GM10248 (cell line): ENCODE measurements at regions of chr3 and their contacts with region 1.

Region 1: DNA sequence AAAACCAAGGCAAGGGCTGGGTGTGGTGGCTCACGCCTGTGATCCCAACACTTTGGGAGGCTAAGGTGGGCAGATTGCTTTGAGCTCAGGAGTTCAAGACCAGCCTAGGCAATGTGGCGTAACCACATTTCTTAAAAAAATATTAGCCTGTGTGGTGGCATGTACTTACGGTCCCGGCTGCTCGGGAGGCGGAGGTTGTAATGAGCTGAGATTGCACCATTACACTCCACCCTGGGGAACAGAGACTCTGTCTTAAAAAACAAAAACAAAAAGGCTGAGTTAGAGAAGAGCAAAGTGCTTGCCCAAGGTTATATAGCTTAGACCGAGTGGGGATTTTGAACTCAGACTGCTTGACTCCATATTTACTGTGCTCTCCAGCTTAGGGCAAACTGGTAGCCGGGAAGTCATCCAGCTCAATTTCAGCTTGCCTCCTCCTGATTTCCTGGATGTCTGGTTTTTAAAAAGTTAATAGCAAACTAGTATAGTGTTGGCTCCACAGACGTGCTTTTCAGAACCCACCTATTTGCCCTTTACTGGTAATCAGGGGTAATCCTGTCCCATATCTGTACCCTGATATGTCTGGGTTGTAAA is 138.9 kb downstream of the CACNA1D start:
- DNase-seq: no peak
- CTCF ChIP-seq: no peak

Region 2: GRCh38 chr3:53604232-53604631 is 29.1 kb before region 1 on chr3:
- CTCF ChIA-PET with region 1: no interaction called
- POLR2A ChIA-PET with region 1: no interaction called
- DNase-seq: no peak
- CTCF ChIP-seq: no peak

Region 3: DNA sequence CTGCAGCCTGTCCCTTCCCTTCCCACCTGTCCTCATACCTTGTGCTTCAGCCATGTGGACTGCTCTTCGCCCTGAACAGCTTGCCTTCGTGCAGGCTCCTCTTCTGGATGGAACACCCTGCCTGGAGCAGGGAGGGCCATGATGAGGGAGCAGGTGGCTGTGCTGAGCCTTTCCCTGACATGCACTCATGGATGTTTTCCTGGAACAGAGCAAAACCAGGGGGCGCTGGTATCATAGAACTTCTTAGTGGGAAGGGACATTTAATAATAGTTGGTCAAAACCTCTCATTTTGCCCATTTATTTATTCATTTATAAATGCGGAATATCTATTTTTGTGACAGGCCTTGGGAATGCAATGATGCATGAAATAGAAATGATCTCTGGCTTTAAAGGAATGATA is 10.5 kb after region 1 on chr3:
- CTCF ChIA-PET with region 1: interaction called, 11 read pairs
- POLR2A ChIA-PET with region 1: no interaction called
- DNase-seq: no peak
- CTCF ChIP-seq: no peak

Region 4: DNA sequence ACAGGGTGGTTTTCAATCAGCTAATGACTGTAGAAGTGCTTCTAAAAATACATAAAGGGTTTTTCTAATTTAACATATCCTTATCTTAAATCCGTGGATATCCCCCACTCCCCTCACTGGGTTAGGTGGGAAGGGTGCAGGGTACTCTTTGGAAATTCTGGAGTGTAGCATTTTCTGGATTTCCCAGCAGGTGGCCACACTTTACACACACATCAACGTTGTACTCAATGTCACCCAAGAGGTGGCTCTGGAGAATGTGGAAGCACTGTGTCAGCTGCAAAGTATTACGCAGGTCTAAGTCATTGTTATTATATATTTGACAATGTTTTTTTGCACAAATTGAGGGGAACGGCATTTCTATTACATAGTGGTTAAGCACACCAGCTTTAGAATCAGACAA is 44.1 kb after region 1 on chr3:
- CTCF ChIA-PET with region 1: no interaction called
- POLR2A ChIA-PET with region 1: no interaction called
- DNase-seq: no peak
- CTCF ChIP-seq: peak; percentile 20